Right lobe of liver (tissue), 6 donors: ENCODE measurements at regions of chr11 and their contacts with region 1.

Region 1: GRCh38 chr11:116879800-116880625 is 42.6 kb upstream of the APOA1 start:
- DNase-seq: no peak
- ATAC-seq: peak; percentile 93 to 98 (median 94)
- H3K4me3 ChIP-seq: no peak overlapping the region
- H3K27ac ChIP-seq: no peak overlapping the region
- H3K4me1 ChIP-seq: peaks cover 0 to 5% (median 0%) of the 10 kb centered on the region in 4 donors
- H3K27me3 ChIP-seq: no peaks in the 10 kb centered on the region
- CTCF ChIP-seq: peak; percentile 65 to 76 (median 74)
- POLR2A ChIP-seq: no peak

Region 2: DNA sequence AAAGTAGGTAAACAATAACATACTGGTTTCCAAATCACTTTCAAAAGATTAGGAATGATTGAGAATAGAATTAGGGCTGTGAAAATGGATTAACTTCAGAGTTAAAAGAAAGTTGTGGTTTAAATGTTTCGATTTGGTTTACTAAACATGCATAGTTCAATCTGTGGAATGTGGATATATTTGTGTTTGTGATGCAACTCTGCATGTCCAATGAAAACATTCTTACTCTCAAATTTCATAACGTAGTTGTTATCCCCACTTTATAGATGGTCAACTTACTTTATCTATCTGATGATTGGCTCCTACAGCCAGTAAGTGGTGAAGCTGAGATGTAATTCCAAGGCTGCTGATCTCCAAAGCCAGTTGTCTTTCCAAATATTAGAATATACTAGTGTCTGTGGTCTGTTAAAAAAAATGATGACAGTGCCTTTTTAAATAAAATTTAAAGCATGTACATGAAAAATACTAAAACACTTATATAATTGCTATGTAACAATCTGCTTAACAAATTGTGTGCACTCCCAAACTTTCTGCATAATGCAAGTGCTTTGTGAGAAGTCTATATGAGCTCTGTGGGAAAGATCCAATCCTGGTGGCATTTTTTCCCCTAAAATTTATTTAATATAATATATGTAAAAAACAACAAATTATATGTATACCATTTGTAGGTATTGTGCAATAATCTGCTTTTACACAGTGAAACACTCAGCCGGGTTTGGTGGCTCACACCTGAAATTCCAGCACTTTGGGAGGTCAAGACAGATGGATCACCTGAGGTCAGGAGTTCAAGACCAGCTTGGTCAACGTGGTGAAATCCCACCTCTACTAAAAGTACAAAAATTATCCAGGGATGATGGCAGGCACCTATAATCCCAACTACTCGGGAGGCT is 227.9 kb after region 1 on chr11:
- intact Hi-C with region 1: loop called (anchors 10 kb)
- DNase-seq: no peak
- ATAC-seq: peak in 2 of 4 donors; percentile 29 to 30
- H3K4me3 ChIP-seq: no peak overlapping the region
- H3K27ac ChIP-seq: no peak overlapping the region
- H3K4me1 ChIP-seq: peaks cover 0 to 7% (median 0%) of the 10 kb centered on the region in 4 donors
- H3K27me3 ChIP-seq: no peaks in the 10 kb centered on the region
- CTCF ChIP-seq: no peak
- POLR2A ChIP-seq: no peak